ENCODE measurements at regions of chr1 and their contacts with region 1.

Region 1: GRCh38 chr1:17498214-17498613 is 41.3 kb upstream of the ARHGEF10L start:
- DNase-seq: no peak
- H3K4me3 ChIP-seq: no peak overlapping the region
- H3K27ac ChIP-seq: no peak overlapping the region
- H3K4me1 ChIP-seq: peaks cover 0 to 10% (median 6%) of the 10 kb centered on the region in 3 donors
- H3K27me3 ChIP-seq: no peaks in the 10 kb centered on the region
- CTCF ChIP-seq: no peak

Region 2: GRCh38 chr1:17611975-17612374 is 113.8 kb after region 1 on chr1:
- intact Hi-C with region 1: loop called (anchors 5 kb)
- DNase-seq: no peak
- H3K4me3 ChIP-seq: no peak overlapping the region
- H3K27ac ChIP-seq: no peak overlapping the region
- H3K4me1 ChIP-seq: no peaks in the 10 kb centered on the region
- H3K27me3 ChIP-seq: no peaks in the 10 kb centered on the region
- CTCF ChIP-seq: no peak